ENCODE measurements at regions of chr3 and their contacts with region 1.

Region 1: DNA sequence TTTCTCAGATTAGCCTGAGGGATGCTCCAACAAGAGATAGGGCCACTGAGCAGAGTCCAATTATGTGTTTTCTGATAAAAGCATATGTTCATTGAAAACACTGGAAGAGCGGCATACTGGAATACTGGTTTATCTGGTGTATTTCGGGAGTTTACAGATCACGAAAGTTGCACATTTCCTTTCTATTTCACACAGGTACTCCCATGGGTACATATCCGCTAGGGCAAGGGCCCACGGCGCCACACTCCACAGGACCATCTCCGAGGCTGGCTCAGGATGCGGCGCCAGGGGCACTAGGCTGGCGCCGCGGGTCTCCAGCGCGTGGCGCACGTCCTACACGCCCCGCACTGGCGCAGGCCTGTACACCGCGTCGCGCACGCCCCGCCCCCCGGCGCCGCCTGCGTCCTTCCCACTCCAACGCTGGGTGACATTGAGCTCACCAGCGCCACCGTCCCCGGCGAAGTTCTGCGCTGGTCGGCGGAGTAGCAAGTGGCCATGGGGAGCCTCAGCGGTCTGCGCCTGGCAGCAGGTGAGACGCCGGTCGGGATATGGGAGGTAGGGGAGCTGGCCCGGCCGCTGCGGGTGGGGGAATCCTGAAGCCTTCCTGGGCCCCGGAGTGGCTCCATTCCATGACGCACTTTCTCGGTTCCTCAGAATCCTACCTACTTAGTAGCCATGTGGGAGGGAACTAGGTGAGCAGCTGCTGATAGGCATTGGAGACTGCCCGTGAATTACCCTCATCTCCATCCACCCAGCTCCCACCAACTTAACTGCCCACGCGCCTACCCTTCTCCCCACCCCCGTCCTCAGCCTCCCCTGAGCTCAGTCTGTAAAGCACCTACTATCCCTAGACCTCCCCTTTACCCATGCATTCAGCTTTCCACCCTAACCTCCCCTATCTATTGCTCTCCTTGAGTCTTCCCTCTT is at the start of gene FAM162A:
- DNase-seq: peak; percentile 97
- H3K4me3 ChIP-seq: peak within 1 kb of the TSS; percentile 73
- H3K27ac ChIP-seq: peak within 1 kb of the TSS; percentile 69
- H3K4me1 ChIP-seq: peaks cover 14% of the 10 kb centered on the region
- H3K27me3 ChIP-seq: no peaks in the 10 kb centered on the region
- CTCF ChIP-seq: peak; percentile 77
- total RNA-seq, gene FAM162A: 54.7 and 58.1 TPM in 2 replicates

Region 2: GRCh38 chr3:122365073-122365472 is 19.0 kb before region 1 on chr3:
- CTCF ChIA-PET with region 1: no interaction called
- POLR2A ChIA-PET with region 1: interaction called, 12 read pairs
- intact Hi-C with region 1: no loop called
- DNase-seq: no peak
- H3K4me3 ChIP-seq: no peak overlapping the region
- H3K27ac ChIP-seq: no peak overlapping the region
- H3K4me1 ChIP-seq: no peaks in the 10 kb centered on the region
- H3K27me3 ChIP-seq: no peaks in the 10 kb centered on the region
- CTCF ChIP-seq: no peak

Region 3: GRCh38 chr3:122403489-122403888 is 19.5 kb after region 1 on chr3:
- CTCF ChIA-PET with region 1: no interaction called
- POLR2A ChIA-PET with region 1: no interaction called
- intact Hi-C with region 1: no loop called
- DNase-seq: peak; percentile 27
- H3K4me3 ChIP-seq: no peak overlapping the region
- H3K27ac ChIP-seq: no peak overlapping the region
- H3K4me1 ChIP-seq: no peaks in the 10 kb centered on the region
- H3K27me3 ChIP-seq: no peaks in the 10 kb centered on the region
- CTCF ChIP-seq: no peak

Region 4: DNA sequence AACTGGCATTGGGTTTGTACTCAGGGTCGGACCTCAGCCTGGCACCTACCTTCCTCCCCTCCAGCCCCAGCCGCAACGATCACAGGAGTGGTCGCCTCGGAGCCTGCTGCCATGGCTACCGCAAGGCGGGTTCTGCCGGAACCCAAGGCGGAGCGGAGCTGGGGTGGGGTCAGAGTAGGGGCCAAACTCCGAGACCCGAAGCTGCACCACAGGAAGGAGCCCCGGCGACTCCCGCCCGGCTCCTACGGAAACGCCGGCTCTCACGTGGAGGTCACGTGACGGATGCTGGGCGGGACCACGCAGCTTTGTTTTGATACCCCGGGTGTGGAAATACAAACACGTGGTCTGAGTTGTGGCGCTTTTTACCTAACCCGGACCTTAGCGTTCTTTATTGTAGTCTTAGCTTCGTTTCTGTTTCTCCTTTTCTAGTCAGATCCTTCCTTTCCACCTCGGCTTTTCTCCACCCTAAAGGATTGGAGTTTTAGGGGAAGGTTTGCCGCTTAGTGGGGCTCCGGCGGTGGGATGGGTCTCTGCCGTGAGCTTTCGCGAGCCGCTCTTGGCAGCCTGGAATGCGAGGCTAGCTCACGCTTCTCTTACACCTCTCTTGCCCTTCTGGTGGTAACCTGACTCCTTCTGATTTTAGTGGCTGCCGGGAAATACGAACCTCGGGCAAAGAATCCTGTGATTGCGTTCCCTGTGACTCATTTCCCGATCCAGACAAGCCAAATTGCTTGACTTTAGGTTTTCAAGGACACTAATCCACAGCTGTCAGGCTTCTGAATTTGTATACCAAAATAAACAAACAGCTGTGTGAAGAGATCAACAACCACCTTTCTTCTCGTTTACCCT is 409.8 kb after region 1 on chr3 and contains the start of gene HSPBAP1:
- CTCF ChIA-PET with region 1: no interaction called
- POLR2A ChIA-PET with region 1: no interaction called
- intact Hi-C with region 1: loop called (anchors 1 kb)
- DNase-seq: peak; percentile 93
- H3K4me3 ChIP-seq: peak within 1 kb of the TSS; percentile 86
- H3K27ac ChIP-seq: peak within 1 kb of the TSS; percentile 78
- H3K4me1 ChIP-seq: peaks cover 6% of the 10 kb centered on the region
- H3K27me3 ChIP-seq: no peaks in the 10 kb centered on the region
- CTCF ChIP-seq: no peak
- total RNA-seq, gene HSPBAP1: 8.2 and 8.7 TPM in 2 replicates

Measured in A673 (cell line).